Activated CD8-positive, alpha-beta memory T cell treated with anti-CD3 and anti-CD28 coated beads, Interleukin-2, amount 10 ng/mL, durations not matched to agents 7 days and 5 days (primary cell): ENCODE measurements at regions of chr1 and their contacts with region 1.

Region 1: GRCh38 chr1:151594143-151594625 is 17.7 kb upstream of the SNX27 start:
- DNase-seq: peak; percentile 89
- ATAC-seq: peak; percentile 98
- H3K4me3 Mint-ChIP-seq: peak overlapping the region; percentile 33
- H3K27ac Mint-ChIP-seq: no peak overlapping the region
- H3K4me1 Mint-ChIP-seq: peaks cover 8% of the 10 kb centered on the region
- H3K27me3 Mint-ChIP-seq: peaks cover 12% of the 10 kb centered on the region

Region 2: DNA sequence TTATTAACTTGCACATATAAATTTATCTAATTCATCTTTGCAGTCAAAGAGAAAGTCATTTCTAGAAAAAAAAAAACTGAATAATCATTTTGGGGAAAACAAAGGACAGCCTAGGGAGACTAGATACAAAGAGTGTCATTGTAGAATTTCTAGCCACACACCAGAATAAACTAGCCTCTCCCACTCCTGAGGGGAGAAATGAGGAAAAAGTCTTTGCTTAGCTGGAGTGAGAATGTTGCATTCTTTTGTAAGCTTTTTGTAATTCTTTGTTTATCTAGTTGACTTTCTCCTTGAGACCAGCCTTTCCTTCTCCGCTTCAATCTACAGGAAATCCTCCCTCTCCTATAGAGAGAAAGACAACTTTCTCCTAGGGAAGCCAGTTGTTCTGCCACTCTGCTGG is 98.9 kb before region 1 on chr1:
- CTCF ChIA-PET with region 1: no interaction called
- DNase-seq: no peak
- ATAC-seq: no peak
- H3K4me3 Mint-ChIP-seq: no peak overlapping the region
- H3K27ac Mint-ChIP-seq: no peak overlapping the region
- H3K4me1 Mint-ChIP-seq: peaks cover 5% of the 10 kb centered on the region
- H3K27me3 Mint-ChIP-seq: peaks cover 3% of the 10 kb centered on the region

Region 3: DNA sequence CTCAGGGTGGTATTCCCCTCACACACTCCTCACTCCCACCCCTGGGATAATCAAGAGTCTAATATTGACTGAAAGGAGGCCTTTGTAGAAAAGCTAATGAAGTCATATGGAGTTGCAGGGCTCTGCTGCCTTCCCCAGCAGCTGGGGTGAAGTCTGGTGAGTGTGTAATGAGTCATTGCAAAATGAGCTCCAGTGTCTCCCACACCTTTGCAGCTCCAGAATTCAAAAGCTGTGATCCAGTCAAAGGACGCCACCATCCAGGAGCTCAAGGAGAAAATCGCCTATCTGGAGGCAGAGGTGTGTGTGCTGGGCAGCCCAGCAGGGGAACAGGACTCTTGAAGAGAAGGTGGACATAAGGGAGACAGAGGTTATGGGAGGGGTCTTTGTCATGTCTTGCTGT is 14.7 kb before region 1 on chr1:
- CTCF ChIA-PET with region 1: interaction called, 23 read pairs
- DNase-seq: no peak
- ATAC-seq: no peak
- H3K4me3 Mint-ChIP-seq: no peak overlapping the region
- H3K27ac Mint-ChIP-seq: no peak overlapping the region
- H3K4me1 Mint-ChIP-seq: peaks cover 24% of the 10 kb centered on the region
- H3K27me3 Mint-ChIP-seq: no peaks in the 10 kb centered on the region

Region 4: GRCh38 chr1:151606395-151606794 is 12.2 kb after region 1 on chr1:
- CTCF ChIA-PET with region 1: interaction called, 12 read pairs
- DNase-seq: no peak
- ATAC-seq: no peak
- H3K4me3 Mint-ChIP-seq: no peak overlapping the region
- H3K27ac Mint-ChIP-seq: no peak overlapping the region
- H3K4me1 Mint-ChIP-seq: peaks cover 3% of the 10 kb centered on the region
- H3K27me3 Mint-ChIP-seq: peaks cover 27% of the 10 kb centered on the region

Region 5: GRCh38 chr1:151739590-151740375 is 145.6 kb after region 1 on chr1:
- CTCF ChIA-PET with region 1: interaction called, 17 read pairs
- DNase-seq: no peak
- ATAC-seq: no peak
- H3K4me3 Mint-ChIP-seq: no peak overlapping the region
- H3K27ac Mint-ChIP-seq: no peak overlapping the region
- H3K4me1 Mint-ChIP-seq: peaks cover 7% of the 10 kb centered on the region
- H3K27me3 Mint-ChIP-seq: peaks cover 15% of the 10 kb centered on the region

Region 6: DNA sequence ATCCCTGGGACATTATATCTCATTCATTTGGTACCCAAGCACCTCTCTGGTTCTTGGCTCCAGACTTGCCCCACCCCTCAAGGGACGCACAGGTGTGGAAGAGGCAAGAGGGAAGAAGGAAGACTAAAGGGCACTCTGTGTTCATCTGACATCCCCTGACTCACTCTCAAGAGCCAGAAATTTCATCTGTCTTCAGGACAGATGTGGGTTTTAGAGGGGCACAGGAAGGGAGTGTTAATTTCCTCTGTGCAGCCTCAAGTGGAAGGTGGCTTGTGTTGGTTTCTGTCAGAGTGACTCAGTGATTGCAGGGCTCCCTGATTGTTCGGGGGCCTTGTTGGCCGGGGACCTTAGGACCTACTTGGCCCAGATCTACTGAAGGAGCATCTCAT is 243.0 kb after region 1 on chr1:
- CTCF ChIA-PET with region 1: interaction called, 25 read pairs
- DNase-seq: peak; percentile 62
- ATAC-seq: peak; percentile 17
- H3K4me3 Mint-ChIP-seq: peak overlapping the region; percentile 68
- H3K27ac Mint-ChIP-seq: peak overlapping the region; percentile 89
- H3K4me1 Mint-ChIP-seq: peaks cover 54% of the 10 kb centered on the region
- H3K27me3 Mint-ChIP-seq: peaks cover 2% of the 10 kb centered on the region